ENCODE measurements at regions of chr11 and their contacts with region 1.

Region 1: DNA sequence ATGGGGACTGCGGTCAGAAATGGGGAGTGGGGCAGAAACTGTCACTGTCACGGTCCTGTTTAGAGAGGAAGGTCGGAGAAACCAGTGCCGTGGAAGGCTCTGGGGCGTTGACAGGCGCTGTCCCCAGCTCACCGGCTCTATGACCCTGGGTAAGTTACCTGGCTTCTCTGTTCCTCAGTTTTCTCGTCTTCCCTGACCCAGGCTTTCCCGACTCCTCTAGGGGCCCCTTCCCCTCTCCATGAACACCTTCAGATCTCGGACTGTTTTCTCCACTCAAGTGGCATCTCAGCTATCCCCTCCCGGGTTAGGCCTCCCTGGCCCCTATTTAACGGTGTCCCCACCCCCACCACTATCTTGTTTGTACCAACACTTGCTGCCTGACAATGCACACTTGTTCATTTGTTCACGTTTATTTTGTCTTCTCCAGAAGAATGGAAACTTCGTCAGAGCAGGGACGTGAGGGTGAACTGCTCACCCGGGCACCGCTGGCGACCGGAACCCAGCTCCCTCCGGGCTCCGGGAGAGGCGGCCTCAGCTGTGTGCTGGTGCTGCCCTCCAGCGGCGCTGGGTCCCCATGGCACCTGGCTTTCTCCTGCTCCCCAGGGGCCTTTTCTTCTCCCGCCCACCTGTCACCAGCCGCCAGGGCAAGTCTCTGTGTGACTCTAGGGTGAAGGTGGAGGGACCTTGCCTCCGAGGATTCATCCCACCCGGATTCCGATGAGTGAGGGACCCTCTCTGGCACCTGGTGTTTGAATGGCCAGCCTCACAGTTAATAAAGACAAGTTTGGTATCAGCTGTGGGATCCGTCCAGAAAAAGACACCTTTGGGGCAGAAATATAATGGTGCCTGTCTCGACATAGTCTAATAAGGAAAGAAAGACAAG is 33.1 kb upstream of the SLC35C1 start:
- DNase-seq: peak; percentile 92
- H3K4me3 Mint-ChIP-seq: peak overlapping the region; percentile 94
- H3K27ac Mint-ChIP-seq: peak overlapping the region; percentile 41
- H3K4me1 Mint-ChIP-seq: peaks cover 15% of the 10 kb centered on the region
- H3K27me3 Mint-ChIP-seq: peaks cover 63% of the 10 kb centered on the region
- CTCF ChIP-seq: peak; percentile 90

Region 2: DNA sequence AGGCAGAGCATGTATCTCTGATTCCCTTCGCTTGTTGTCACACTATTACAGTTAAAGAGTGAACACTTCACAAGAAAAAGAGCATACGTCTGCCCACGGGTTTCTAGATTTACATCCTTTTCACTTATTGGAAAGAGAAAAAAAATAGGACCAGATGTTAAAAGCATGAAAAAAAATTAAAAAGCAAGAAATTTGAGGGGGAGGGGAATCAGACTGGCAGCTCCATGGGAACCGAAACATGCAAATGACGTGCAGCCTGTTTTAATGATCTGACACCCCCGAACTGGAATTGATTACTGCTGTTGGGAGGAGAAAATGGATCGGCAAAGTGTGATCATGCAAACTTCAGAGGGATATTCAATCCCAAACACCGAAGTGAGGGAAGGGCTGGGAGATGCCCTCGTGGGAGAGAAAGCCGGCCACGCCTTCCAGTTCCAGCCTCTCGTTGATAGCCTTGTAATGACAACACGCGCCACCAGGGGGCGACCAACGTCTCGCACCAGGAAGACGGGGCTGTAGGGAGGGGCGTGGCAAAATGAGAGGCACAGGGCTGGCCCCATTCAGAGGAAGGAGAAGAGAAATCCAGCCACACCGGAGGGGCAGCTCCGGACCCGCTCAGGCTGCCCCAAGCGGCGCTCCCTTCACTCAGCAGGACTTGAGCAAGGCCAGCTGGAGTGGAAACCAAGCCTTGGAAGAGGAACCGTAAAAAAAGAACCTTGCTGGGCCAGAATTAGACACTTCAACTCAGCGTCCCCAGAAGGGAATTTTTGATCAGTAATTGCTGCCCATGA is 431.9 kb before region 1 on chr11:
- CTCF ChIA-PET with region 1: interaction called, 14 read pairs
- intact Hi-C with region 1: loop called (anchors 1 kb)
- DNase-seq: peak; percentile 97
- H3K4me3 Mint-ChIP-seq: peak overlapping the region; percentile 5
- H3K27ac Mint-ChIP-seq: no peak overlapping the region
- H3K4me1 Mint-ChIP-seq: peaks cover 13% of the 10 kb centered on the region
- H3K27me3 Mint-ChIP-seq: peaks cover 86% of the 10 kb centered on the region
- CTCF ChIP-seq: peak; percentile 94

Region 3: GRCh38 chr11:45371251-45372115 is 400.3 kb before region 1 on chr11:
- CTCF ChIA-PET with region 1: interaction called, 29 read pairs
- intact Hi-C with region 1: loop called (anchors 10 kb)
- DNase-seq: peak; percentile 73
- H3K4me3 Mint-ChIP-seq: no peak overlapping the region
- H3K27ac Mint-ChIP-seq: no peak overlapping the region
- H3K4me1 Mint-ChIP-seq: no peaks in the 10 kb centered on the region
- H3K27me3 Mint-ChIP-seq: peaks cover 98% of the 10 kb centered on the region
- CTCF ChIP-seq: peak; percentile 80